H1 (cell line): ENCODE measurements at regions of chr5 and their contacts with region 1.

Region 1: GRCh38 chr5:170420780-170421412 is 31.7 kb upstream of the KCNMB1 start:
- DNase-seq: peak in 1 of 2 experiments; percentile 72
- H3K4me3 ChIP-seq: no peak overlapping the region
- H3K27ac ChIP-seq: no peak overlapping the region
- H3K4me1 ChIP-seq: peaks cover 0 to 2% (median 0%) of the 10 kb centered on the region in 4 experiments; a peak in 2 of 7 replicates
- H3K27me3 ChIP-seq: no peaks in the 10 kb centered on the region
- CTCF ChIP-seq: peak; percentile 51 to 89 (median 87)
- EP300 ChIP-seq: no peak
- POLR2A ChIP-seq: no peak
- RAD21 ChIP-seq: peak; percentile 82 to 85

Region 2: GRCh38 chr5:170388818-170389549 is 31.9 kb before region 1 on chr5 and contains the start of gene KCNMB1:
- CTCF ChIA-PET with region 1: interaction called, 12 read pairs
- POLR2A ChIA-PET with region 1: no interaction called
- DNase-seq: no peak
- H3K4me3 ChIP-seq: no peak within 1 kb of the TSS
- H3K27ac ChIP-seq: no peak within 1 kb of the TSS
- H3K4me1 ChIP-seq: peaks cover 0 to 21% (median 9%) of the 10 kb centered on the region in 4 experiments; a peak in 4 of 7 replicates
- H3K27me3 ChIP-seq: no peaks in the 10 kb centered on the region; a peak in 1 of 7 replicates
- CTCF ChIP-seq: no peak
- EP300 ChIP-seq: no peak
- POLR2A ChIP-seq: no peak
- RAD21 ChIP-seq: no peak
- total RNA-seq, gene KCNMB1: 0.10 and 0.19 TPM in 2 replicates